ENCODE measurements at regions of chr3 and their contacts with region 1.

Region 1: DNA sequence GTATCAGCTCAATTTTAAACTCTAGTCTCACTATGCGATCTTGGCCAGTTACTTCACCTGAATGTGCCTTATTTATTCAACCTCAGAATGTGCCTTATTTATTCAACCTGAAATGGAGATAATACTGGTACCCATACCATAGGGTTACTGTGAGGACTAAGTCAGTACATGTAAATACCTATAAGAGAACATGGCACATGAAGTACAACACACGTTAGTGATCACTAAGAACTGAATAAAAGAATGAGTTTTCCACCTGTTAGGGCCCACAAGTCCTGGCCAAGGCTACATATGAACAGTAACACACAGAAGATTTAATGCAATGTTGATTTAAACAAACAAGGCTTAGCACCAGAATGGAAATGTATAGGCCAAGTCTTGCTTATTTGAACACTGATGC is 84.3 kb downstream of the FEZF2 start:
- DNase-seq: no peak
- H3K4me3 Mint-ChIP-seq: no peak overlapping the region
- H3K27ac Mint-ChIP-seq: no peak overlapping the region
- H3K4me1 Mint-ChIP-seq: no peaks in the 10 kb centered on the region
- H3K27me3 Mint-ChIP-seq: no peaks in the 10 kb centered on the region

Region 2: GRCh38 chr3:62131592-62131991 is 157.5 kb before region 1 on chr3:
- CTCF ChIA-PET with region 1: no interaction called
- POLR2A ChIA-PET with region 1: interaction called, 13 read pairs
- intact Hi-C with region 1: no loop called
- DNase-seq: no peak
- H3K4me3 Mint-ChIP-seq: no peak overlapping the region
- H3K27ac Mint-ChIP-seq: no peak overlapping the region
- H3K4me1 Mint-ChIP-seq: no peaks in the 10 kb centered on the region
- H3K27me3 Mint-ChIP-seq: peaks cover 2% of the 10 kb centered on the region

Region 3: DNA sequence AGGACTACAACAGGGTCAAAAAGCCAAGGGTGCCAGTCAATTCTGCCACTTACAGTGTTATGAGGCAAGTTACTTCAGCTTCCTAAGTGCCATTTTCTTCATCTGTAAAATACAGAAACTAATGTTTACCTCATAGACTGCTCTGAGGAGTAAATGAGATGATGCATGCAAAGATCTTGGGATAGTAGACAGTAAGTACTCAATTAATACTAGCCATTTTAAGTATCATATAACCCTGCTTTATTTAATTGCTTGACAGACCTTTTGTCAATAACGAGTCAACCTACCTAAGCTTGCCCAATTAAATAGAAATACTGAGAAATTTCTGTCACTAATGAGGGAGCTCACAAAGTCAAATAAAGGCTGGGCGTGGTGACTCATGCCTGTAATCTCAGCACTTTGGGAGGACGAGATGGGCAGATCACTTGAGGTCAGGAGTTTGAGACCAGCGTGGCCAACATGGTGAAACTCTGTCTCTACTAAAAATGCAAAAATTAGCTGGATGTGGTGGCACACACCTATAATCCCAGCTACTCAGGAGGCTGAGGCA is 10.8 kb after region 1 on chr3:
- CTCF ChIA-PET with region 1: no interaction called
- POLR2A ChIA-PET with region 1: no interaction called
- intact Hi-C with region 1: no loop called
- DNase-seq: no peak
- H3K4me3 Mint-ChIP-seq: no peak overlapping the region
- H3K27ac Mint-ChIP-seq: no peak overlapping the region
- H3K4me1 Mint-ChIP-seq: no peaks in the 10 kb centered on the region
- H3K27me3 Mint-ChIP-seq: peaks cover 4% of the 10 kb centered on the region

Region 4: GRCh38 chr3:62318750-62319569 is 29.9 kb after region 1 on chr3:
- CTCF ChIA-PET with region 1: no interaction called
- POLR2A ChIA-PET with region 1: no interaction called
- intact Hi-C with region 1: no loop called
- DNase-seq: peak; percentile 82
- H3K4me3 Mint-ChIP-seq: peak overlapping the region; percentile 96
- H3K27ac Mint-ChIP-seq: peak overlapping the region; percentile 98
- H3K4me1 Mint-ChIP-seq: peaks cover 9% of the 10 kb centered on the region
- H3K27me3 Mint-ChIP-seq: peaks cover 24% of the 10 kb centered on the region

Region 5: DNA sequence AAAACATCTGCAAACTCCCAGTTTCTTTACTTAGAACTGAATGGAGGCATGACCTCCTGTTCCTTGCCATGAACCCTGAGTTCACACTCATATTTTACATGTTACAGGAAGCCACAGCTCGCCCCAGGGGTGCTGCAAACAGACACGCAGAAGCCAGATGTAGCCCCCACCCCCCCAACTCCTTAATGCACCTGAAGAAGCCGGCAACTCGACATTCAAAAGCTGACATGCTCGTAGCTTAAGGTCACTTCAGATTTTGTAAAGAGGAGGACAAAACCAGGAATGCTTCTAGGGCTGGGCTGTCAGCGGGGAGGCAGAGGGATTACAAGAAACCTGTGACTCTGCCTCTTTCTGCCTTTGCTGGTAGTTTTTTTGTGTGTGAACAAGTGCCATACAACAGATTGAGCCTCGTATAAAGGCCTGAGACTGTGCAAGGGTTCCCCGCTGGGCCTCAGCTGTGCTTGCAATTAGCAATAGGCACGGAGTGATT is 126.3 kb after region 1 on chr3:
- CTCF ChIA-PET with region 1: no interaction called
- POLR2A ChIA-PET with region 1: no interaction called
- intact Hi-C with region 1: no loop called
- DNase-seq: no peak
- H3K4me3 Mint-ChIP-seq: no peak overlapping the region
- H3K27ac Mint-ChIP-seq: no peak overlapping the region
- H3K4me1 Mint-ChIP-seq: no peaks in the 10 kb centered on the region
- H3K27me3 Mint-ChIP-seq: peaks cover 2% of the 10 kb centered on the region